ENCODE measurements at regions of chr19 and their contacts with region 1.

Region 1: GRCh38 chr19:38975214-38975860 is at the start of gene FBXO17:
- DNase-seq: peak; percentile 21 to 94 (median 62)

Region 2: DNA sequence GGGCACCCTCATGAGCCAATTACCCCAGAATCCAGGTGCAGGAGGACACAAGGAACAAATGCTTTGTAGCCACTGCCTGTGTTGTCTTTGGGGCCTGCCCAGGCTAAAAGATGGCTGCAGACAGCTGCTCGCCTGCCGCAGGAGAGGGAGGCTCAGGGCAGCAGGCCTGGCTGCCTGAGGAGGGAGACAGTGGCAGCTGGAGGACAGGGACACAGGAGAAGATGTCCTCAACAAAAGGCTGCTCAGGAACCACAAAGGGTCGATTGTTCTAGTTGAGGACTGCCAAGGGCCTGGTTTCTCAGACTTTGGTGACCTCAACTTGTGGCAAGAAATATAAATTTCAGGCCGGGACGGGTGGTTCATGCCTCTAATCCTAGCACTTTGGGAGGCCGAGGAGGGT is 83.6 kb before region 1 on chr19:
- intact Hi-C with region 1: no loop called
- DNase-seq: peak in 8 of 10 donors; percentile 22 to 92 (median 50)

Region 3: GRCh38 chr19:39031368-39032062 is 56.2 kb after region 1 on chr19:
- intact Hi-C with region 1: loop called (anchors 10 kb)
- DNase-seq: peak; percentile 62 to 99 (median 85)